GM12878 (cell line): ENCODE measurements at regions of chr1 and their contacts with region 1.

Region 1: DNA sequence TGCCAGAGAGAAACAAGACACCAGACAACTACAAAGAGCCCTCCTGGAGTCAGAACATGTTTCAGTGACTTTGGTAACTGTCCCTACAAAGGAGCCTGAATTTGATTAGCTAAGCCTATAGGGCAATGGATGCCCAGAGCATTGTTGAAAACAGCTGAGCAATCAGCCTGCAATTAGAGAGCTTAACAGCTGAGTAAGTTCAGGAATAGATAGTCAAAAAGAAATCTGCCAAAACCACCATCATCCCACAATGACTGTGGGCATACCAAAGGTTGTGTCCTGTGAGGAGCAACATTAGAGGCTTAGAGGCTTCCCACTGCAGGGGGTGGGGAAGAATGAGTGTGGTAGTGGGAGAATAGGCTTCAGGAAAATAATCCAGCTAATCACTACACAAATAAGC is 32.1 kb downstream of the SH3BP5L start:
- DNase-seq: peak; percentile 82
- ATAC-seq: peak; percentile 97
- H3K4me3 ChIP-seq: no peak overlapping the region
- H3K27ac ChIP-seq: no peak overlapping the region
- H3K4me1 ChIP-seq: peaks cover 18% of the 10 kb centered on the region
- H3K27me3 ChIP-seq: no peaks in the 10 kb centered on the region
- CTCF ChIP-seq: no peak
- EP300 ChIP-seq: peak in 1 of 2 experiments; percentile 86; a peak in 2 of 4 replicates
- POLR2A ChIP-seq: no peak
- RAD21 ChIP-seq: 0 out of 2 replicates have a peak, but pooled peaks have one; percentile 9

Region 2: DNA sequence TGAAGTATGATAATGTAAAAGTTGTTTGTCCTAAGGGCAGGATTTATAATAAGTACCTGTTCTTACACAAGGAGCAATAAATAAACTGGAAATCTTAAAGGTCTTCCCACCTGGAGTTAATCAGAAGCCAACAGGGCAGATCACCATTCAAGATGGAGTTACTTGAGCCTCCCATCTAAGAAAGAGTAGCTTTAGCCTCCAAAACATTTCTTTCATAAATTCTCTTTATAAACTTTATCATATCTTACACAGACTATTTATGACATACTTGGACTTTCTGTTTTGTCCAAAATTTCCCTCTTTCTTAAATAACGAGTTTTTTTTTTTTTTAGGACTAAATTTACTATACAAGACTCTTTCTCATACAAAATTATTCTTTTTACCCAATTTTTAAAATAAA is 372.2 kb before region 1 on chr1:
- CTCF ChIA-PET with region 1: no interaction called
- POLR2A ChIA-PET with region 1: no interaction called
- RAD21 ChIA-PET with region 1: no interaction called
- SMC1A ChIA-PET with region 1: interaction called, 3 read pairs
- in situ Hi-C with region 1: no loop called
- intact Hi-C with region 1: loop called (anchors 5 kb)
- DNase-seq: no peak
- ATAC-seq: no peak
- H3K4me3 ChIP-seq: no peak overlapping the region
- H3K27ac ChIP-seq: no peak overlapping the region
- H3K4me1 ChIP-seq: no peaks in the 10 kb centered on the region; the same call in 1 of the 2 replicates
- H3K27me3 ChIP-seq: no peaks in the 10 kb centered on the region
- CTCF ChIP-seq: no peak
- EP300 ChIP-seq: no peak
- POLR2A ChIP-seq: no peak
- RAD21 ChIP-seq: no peak

Region 3: GRCh38 chr1:248686815-248687214 is 106.8 kb before region 1 on chr1:
- CTCF ChIA-PET with region 1: interaction called, 3 read pairs
- POLR2A ChIA-PET with region 1: interaction called, 3 read pairs
- RAD21 ChIA-PET with region 1: interaction called, 7 read pairs
- SMC1A ChIA-PET with region 1: interaction called, 5 read pairs
- in situ Hi-C with region 1: no loop called
- intact Hi-C with region 1: loop called (anchors 1 kb)
- DNase-seq: peak; percentile 43
- ATAC-seq: peak; percentile 78
- H3K4me3 ChIP-seq: no peak overlapping the region
- H3K27ac ChIP-seq: no peak overlapping the region; the same call in 1 of the 2 replicates
- H3K4me1 ChIP-seq: peaks cover 3% of the 10 kb centered on the region; the same call in 1 of the 2 replicates
- H3K27me3 ChIP-seq: no peaks in the 10 kb centered on the region
- CTCF ChIP-seq: peak; percentile 45 to 70 (median 70); a peak in 5 of 6 replicates
- EP300 ChIP-seq: no peak
- POLR2A ChIP-seq: no peak
- RAD21 ChIP-seq: peak; percentile 95

Region 4: DNA sequence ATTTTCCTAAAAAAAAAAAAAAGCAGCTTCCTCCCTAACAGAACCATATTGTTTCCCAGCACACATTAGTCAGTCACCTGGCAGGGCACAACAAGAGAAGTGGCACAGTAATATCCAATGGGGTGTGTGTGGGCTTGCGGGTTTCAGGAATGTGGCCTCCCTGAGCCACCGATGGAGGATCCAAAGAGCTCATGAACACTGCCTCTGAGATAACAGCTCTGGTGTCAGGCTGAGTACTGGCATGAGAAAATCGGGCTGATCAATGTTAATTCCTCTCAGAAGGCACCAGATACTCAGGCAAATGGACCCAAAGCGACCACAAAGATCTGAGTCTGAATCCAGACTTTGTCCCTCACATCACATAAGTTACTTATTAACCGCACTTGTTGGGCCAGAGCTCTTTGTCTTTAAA is 35.8 kb before region 1 on chr1:
- CTCF ChIA-PET with region 1: no interaction called
- POLR2A ChIA-PET with region 1: no interaction called
- RAD21 ChIA-PET with region 1: no interaction called
- SMC1A ChIA-PET with region 1: no interaction called
- in situ Hi-C with region 1: no loop called
- intact Hi-C with region 1: loop called (anchors 5 kb)
- DNase-seq: no peak
- ATAC-seq: no peak
- H3K4me3 ChIP-seq: no peak overlapping the region
- H3K27ac ChIP-seq: no peak overlapping the region
- H3K4me1 ChIP-seq: no peaks in the 10 kb centered on the region
- H3K27me3 ChIP-seq: no peaks in the 10 kb centered on the region
- CTCF ChIP-seq: no peak
- EP300 ChIP-seq: no peak
- POLR2A ChIP-seq: no peak
- RAD21 ChIP-seq: no peak

Region 5: DNA sequence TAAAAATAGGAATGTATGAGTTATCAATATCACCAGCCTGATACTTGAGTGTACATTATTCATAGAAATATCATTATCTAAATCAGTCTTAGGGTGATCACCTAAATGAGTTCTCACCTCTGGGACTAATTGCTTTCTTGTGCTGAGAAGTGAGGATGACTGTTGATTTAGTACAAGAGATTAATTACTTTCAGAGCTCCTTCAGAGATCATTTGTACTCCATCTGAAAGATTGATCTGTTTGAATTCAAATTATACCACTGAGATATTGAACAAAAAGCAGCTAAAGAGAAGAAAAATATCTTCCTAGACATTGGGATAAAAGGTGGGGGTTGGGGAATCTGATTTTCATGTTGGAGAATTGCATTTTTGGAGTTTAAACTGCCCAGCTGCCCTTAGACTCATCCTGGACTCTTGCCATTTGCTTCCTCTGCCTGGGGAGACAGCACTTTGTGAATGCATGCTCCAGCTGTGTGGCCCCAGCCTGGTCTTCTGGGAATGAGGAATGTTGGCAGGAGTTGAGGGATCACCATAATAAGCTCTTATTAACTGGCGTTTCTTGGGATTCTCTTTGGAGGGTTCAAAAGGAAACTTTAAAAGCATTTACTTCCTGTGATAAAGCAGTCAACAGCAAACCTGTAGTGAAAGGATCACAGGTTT is 92.8 kb after region 1 on chr1:
- CTCF ChIA-PET with region 1: no interaction called
- POLR2A ChIA-PET with region 1: no interaction called
- RAD21 ChIA-PET with region 1: no interaction called
- SMC1A ChIA-PET with region 1: no interaction called
- in situ Hi-C with region 1: no loop called
- intact Hi-C with region 1: no loop called
- DNase-seq: no peak
- ATAC-seq: no peak
- H3K4me3 ChIP-seq: no peak overlapping the region
- H3K27ac ChIP-seq: no peak overlapping the region
- H3K4me1 ChIP-seq: no peaks in the 10 kb centered on the region
- H3K27me3 ChIP-seq: no peaks in the 10 kb centered on the region
- CTCF ChIP-seq: no peak
- EP300 ChIP-seq: no peak
- POLR2A ChIP-seq: no peak
- RAD21 ChIP-seq: no peak

Region 6: DNA sequence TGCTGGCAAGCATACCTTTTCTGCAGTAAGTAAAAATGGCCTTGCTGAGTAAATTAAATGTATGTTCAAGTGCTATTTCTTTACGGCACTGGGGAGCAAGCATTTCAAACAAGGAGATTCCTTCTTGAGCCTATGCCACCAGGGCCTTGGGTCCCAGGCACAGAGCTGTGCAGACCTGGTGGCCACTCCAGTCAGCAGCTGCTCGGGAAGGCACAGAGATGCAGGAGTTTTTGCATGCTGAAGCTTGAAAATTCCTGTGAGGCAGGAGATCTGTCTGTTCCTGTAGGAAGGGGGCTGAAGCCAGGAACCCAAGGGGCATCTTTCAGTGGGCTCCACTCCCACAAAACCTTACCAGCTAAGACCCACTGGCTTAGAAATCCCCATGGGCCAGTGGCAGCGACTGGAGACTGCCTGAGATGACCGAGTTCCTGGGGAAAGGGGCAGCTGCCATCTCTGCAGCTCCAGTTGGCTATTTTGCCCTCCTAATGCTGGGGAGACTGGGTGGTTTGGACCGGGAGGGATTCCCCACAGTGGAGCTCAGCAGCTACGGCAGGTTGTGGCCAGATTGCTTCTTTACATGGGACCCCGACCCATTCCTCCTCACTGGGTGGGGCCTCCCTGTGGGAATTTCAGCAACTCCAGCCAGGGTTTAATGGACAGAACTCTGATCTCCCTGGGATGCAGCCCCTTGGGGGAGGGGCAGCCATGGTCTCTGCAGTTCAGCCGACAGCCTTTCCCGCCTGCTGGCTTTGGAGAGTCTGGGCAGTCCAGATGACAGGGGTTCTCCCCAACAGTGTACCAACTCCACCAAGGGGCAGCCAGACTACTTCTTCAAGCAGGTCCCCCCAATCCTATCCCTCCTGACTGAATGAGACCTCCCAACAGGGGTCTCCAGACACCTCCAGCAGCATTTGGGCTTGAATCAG is 104.1 kb after region 1 on chr1:
- CTCF ChIA-PET with region 1: no interaction called
- POLR2A ChIA-PET with region 1: no interaction called
- RAD21 ChIA-PET with region 1: no interaction called
- SMC1A ChIA-PET with region 1: no interaction called
- in situ Hi-C with region 1: no loop called
- intact Hi-C with region 1: no loop called
- DNase-seq: no peak
- ATAC-seq: no peak
- H3K4me3 ChIP-seq: no peak overlapping the region
- H3K27ac ChIP-seq: no peak overlapping the region
- H3K4me1 ChIP-seq: no peaks in the 10 kb centered on the region
- H3K27me3 ChIP-seq: no peaks in the 10 kb centered on the region; a peak in 1 of 4 replicates
- CTCF ChIP-seq: no peak
- EP300 ChIP-seq: no peak
- POLR2A ChIP-seq: no peak
- RAD21 ChIP-seq: no peak